ENCODE measurements at regions of chr5 and their contacts with region 1.

Region 1: DNA sequence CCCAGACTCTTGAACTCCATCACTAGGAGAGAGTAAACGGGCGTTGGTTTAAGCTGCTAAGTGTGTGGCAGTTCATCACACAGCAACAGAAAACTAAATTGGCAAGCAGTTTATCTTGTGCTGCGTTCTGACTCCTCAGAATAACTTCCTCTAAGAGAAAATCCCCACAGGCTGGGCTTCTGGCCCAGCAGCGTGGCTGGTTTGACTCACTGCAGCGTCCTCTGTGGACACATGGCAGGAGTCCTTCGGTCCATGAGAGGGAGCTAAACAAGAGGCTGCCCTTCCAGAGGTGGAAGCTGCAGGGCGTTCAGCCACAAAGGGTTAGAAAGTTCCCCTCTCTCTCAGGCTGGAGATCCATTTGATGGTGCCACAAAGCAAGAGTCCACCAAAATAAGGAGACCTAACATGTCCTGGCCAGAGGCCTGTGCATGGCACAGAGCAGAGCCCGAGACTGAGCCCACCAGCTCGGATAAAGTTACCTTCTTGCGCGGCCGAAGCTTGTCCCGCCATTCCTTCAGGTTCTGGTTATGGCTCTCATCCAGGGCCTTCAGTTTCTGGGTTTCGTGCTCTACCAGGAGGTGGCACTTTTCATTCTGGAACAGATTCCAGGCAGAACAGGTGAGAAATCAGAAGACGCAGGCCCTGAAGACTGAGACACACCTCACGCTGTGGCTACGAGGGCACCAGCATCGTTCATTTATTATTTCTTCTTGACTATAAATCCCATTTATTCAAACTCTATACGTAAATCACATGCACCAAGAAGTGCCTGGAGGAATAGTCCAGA is 46.2 kb upstream of the FBXW11 start:
- DNase-seq: peak; percentile 86
- ATAC-seq: peak; percentile 93
- H3K4me3 ChIP-seq: no peak overlapping the region
- H3K27ac ChIP-seq: no peak overlapping the region
- H3K4me1 ChIP-seq: no peaks in the 10 kb centered on the region
- H3K27me3 ChIP-seq: no peaks in the 10 kb centered on the region
- CTCF ChIP-seq: peak; percentile 55
- POLR2A ChIP-seq: no peak
- RAD21 ChIP-seq: peak; percentile 45

Region 2: GRCh38 chr5:172188033-172188892 is 135.6 kb after region 1 on chr5 and contains the start of gene STK10:
- CTCF ChIA-PET with region 1: interaction called, 4 read pairs
- POLR2A ChIA-PET with region 1: no interaction called
- dilution Hi-C with region 1: no loop called
- in situ Hi-C with region 1: no loop called
- intact Hi-C with region 1: loop called (anchors 2 kb)
- DNase-seq: peak; percentile 87
- ATAC-seq: peak; percentile 90
- H3K4me3 ChIP-seq: peak within 1 kb of the TSS; percentile 98
- H3K27ac ChIP-seq: peak within 1 kb of the TSS; percentile 88
- H3K4me1 ChIP-seq: peaks cover 11% of the 10 kb centered on the region
- H3K27me3 ChIP-seq: no peaks in the 10 kb centered on the region
- CTCF ChIP-seq: peak; percentile 92
- POLR2A ChIP-seq: 0 out of 2 replicates have a peak, but pooled peaks have one; percentile 17
- RAD21 ChIP-seq: peak; percentile 96
- total RNA-seq, gene STK10: 15.4 and 16.4 TPM in 2 replicates